ENCODE measurements at regions of chr1 and their contacts with region 1.

Region 1: DNA sequence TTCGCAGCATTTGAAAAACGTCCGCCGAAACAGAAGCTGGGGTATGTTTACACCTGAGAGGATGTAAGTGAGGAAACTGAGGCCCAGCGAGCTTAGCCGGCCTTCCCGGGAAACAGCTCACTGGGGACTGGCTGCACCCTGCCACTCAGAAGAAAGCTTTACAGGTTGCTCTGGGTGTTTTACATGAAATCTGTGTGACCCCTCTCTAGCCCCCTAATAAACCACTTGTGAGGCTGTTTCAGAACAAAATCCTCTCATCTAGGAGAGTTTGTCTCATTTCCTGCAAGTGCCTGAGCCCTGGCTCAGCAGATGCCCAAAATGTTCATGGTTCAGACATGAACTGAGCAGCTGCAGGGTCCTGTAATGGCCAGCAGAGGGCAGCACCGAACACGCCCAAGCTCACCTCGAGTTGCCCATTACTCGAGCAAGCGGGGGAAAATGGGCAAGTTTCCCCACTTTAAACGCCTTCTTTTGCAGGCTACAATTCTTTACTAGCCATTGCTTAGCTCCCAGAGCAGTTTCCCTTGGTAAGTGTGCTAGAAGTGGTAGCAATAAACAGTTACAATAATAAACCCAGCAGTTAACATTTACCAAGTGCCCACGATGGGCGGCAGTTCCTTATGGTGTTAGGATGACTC is 76.4 kb downstream of the FHAD1 start:
- DNase-seq: peak; percentile 65
- H3K4me3 ChIP-seq: no peak overlapping the region
- H3K27ac ChIP-seq: no peak overlapping the region
- H3K27me3 ChIP-seq: no peaks in the 10 kb centered on the region
- CTCF ChIP-seq: peak; percentile 97

Region 2: GRCh38 chr1:15196807-15197530 is 126.5 kb before region 1 on chr1:
- CTCF ChIA-PET with region 1: no interaction called
- POLR2A ChIA-PET with region 1: no interaction called
- DNase-seq: no peak
- H3K4me3 ChIP-seq: no peak overlapping the region
- H3K27ac ChIP-seq: no peak overlapping the region
- H3K27me3 ChIP-seq: no peaks in the 10 kb centered on the region
- CTCF ChIP-seq: no peak

Region 3: DNA sequence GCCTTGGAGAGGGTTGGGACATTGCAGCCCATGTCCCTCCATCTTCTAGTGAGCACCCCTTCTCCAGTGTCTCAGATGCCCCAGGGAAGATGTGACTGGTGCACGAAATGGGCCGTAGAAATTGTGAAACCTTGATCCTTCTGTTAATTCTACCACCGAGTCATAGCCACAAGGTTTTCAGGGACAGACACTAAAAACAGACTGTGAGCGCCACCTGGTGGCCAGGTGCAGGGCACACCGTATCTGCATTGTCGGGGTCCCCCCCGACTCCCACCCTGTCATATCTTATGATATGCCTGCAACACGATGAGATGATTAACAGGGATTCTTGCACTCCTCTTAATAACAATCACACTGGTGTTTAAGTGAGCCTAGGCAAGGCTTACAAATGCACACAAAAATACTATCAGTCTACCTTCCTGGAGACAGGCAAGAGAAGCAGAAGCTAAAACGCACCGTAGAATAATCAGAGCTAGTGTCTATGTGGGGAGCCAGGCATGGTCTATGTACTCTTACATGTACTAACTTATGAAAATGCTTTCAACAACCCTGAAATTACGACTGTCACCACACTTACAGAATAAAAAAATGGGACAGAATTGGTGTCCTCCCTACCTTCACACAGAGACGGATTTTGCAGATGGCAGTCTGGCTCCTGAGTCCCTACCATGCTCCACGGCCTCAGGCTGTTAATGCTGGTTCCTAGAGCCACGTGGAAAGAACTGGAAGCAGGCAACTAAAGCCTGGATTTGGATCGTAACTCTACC is 18.6 kb before region 1 on chr1:
- CTCF ChIA-PET with region 1: interaction called, 24 read pairs
- POLR2A ChIA-PET with region 1: no interaction called
- DNase-seq: no peak
- H3K4me3 ChIP-seq: no peak overlapping the region
- H3K27ac ChIP-seq: no peak overlapping the region
- H3K27me3 ChIP-seq: peaks cover 3% of the 10 kb centered on the region
- CTCF ChIP-seq: peak; percentile 74

Region 4: DNA sequence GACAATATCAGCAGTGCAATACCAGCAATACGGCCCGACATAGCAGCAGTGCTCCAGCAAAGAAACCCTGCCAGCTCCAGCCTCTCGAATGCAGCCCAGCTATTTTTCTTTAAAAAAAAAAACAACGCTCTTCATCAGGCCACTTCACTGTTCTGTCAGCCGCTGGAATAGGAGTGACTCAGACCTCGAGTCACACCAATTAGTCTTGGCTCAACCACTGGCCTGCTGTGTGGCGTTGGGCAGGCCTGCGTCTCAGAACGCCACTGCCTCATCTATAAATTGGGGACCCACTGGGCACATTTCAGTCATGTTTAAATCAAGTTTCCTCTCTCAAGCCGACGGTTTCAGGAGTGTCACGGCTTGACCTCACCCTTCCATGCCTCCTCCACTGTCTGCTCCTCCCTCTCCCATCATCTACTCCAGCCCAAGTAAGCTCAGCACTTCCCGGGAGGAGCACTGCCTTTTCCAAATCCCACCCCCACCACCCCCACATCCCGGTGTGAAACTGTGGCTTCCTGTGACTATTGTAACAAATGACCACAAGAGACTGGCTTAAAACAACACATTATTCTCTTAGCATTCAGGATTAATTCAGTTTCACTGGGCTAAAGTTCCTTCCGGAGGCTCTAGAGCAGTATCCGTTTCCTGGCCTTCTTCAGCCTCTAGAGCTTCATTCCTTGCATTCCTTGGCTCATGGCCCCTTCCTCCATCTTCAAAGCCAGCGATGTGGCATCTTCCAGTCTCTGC is 14.4 kb after region 1 on chr1:
- CTCF ChIA-PET with region 1: interaction called, 49 read pairs
- POLR2A ChIA-PET with region 1: interaction called, 3 read pairs
- DNase-seq: no peak
- H3K4me3 ChIP-seq: no peak overlapping the region
- H3K27ac ChIP-seq: peak overlapping the region; percentile 65
- H3K27me3 ChIP-seq: no peaks in the 10 kb centered on the region
- CTCF ChIP-seq: no peak

Region 5: DNA sequence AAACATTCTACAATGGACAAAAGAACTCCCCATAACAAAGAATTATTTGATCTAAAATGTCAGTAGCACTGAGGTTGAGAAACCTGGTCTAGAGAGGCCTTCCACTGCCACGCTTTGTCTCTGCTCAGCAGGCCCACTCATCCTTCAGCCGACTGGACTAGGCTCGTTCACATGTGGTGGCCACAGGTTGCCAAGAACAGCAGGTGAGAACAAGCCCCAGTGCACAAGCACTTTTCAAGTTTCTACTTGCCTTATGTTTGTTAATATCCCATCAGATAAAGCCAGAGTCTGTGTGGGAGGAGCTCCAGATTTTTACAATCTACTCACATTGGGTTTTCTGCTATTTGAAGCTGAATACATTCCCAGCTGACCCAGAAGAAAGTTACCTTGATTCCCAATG is 77.2 kb after region 1 on chr1:
- CTCF ChIA-PET with region 1: interaction called, 16 read pairs
- POLR2A ChIA-PET with region 1: no interaction called
- DNase-seq: no peak
- H3K4me3 ChIP-seq: no peak overlapping the region
- H3K27ac ChIP-seq: no peak overlapping the region
- H3K27me3 ChIP-seq: peaks cover 4% of the 10 kb centered on the region
- CTCF ChIP-seq: no peak

Region 6: DNA sequence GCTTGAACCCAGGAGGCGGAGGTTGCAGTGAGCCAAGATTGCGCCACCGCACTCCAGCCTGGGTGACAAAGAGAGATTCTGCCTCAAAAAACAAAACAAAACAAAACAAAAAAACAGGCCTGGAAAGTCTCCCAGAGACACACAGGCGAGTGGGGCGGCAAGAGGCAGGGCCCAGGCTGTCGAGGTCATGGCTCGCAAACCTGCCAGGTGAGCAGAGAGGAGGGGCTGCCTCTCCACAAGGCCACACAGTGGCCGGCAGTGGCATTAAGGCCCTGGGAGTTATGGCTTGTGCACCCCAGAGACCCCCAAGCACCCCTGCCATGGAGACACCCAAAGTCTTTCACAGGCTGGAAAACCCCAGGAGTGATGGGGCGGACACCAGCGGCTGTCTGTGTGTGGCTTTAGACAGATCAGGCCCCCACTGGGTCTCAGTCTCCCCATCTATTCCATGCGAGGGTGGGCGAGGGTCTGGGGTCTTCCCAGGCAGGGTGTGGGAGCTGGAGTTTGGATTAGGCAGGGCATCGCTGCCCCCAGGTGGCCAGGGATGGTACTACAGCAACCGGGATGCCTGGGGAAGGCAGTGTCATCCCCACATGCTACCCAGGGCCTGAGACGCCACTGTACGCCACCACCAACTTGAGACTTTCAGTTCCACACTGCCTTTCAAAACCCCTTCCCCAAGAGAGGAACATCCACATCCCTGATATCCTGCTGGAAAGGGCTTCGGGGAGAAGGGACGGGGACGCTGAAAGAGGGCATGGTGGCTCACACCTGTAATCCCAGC is 107.5 kb after region 1 on chr1:
- CTCF ChIA-PET with region 1: interaction called, 173 read pairs
- POLR2A ChIA-PET with region 1: interaction called, 6 read pairs
- DNase-seq: no peak
- H3K4me3 ChIP-seq: no peak overlapping the region
- H3K27ac ChIP-seq: peak overlapping the region; percentile 21
- H3K27me3 ChIP-seq: no peaks in the 10 kb centered on the region
- CTCF ChIP-seq: peak; percentile 94

Region 7: GRCh38 chr1:15501208-15502032 is 177.9 kb after region 1 on chr1:
- CTCF ChIA-PET with region 1: interaction called, 17 read pairs
- POLR2A ChIA-PET with region 1: no interaction called
- DNase-seq: no peak
- H3K4me3 ChIP-seq: no peak overlapping the region
- H3K27ac ChIP-seq: no peak overlapping the region
- H3K27me3 ChIP-seq: no peaks in the 10 kb centered on the region
- CTCF ChIP-seq: peak; percentile 84

Measured in AG04450 (cell line).